CD8-positive, alpha-beta T cell (primary cell): ENCODE measurements at regions of chr6 and their contacts with region 1.

Region 1: GRCh38 chr6:163460307-163460782 is 45.8 kb downstream of the QKI start:
- DNase-seq: peak in 6 of 9 experiments; percentile 2 to 74 (median 33)
- ATAC-seq: peak; percentile 90
- H3K4me3 ChIP-seq: peak overlapping the region; percentile 48 to 56
- H3K4me3 Mint-ChIP-seq: peak overlapping the region; percentile 92
- H3K27ac ChIP-seq: peak overlapping the region; percentile 76 to 88
- H3K27ac Mint-ChIP-seq: peak overlapping the region; percentile 98
- H3K4me1 ChIP-seq: peaks cover 28% of the 10 kb centered on the region
- H3K4me1 Mint-ChIP-seq: peaks cover 58% of the 10 kb centered on the region
- H3K27me3 ChIP-seq: no peaks in the 10 kb centered on the region
- H3K27me3 Mint-ChIP-seq: no peaks in the 10 kb centered on the region
- CTCF ChIP-seq: no peak

Region 2: DNA sequence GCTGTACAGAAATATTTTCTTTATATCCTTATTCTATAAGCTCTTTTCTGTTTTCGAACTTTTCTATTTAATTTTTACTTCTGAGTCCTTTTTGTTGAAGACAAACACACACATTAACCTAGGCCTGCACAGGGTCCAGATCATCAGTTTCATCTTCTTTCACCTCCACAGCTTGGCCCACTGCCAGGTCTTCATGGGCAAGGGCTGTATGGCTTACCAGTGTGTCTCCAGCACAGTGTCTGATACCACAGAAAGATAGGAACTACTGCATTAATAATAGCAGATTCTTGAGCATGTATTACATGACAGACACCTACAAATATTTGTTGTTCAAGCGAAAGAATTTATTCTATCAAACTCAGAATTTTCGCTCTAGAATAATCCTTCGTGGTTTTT is 21.4 kb before region 1 on chr6:
- CTCF ChIA-PET with region 1: no interaction called
- POLR2A ChIA-PET with region 1: interaction called, 3 read pairs
- intact Hi-C with region 1: loop called (anchors 1 to 2 kb)
- DNase-seq: peak in 8 of 9 experiments; percentile 16 to 62 (median 50)
- ATAC-seq: no peak
- H3K4me3 ChIP-seq: no peak overlapping the region
- H3K4me3 Mint-ChIP-seq: no peak overlapping the region
- H3K27ac ChIP-seq: no peak overlapping the region
- H3K27ac Mint-ChIP-seq: no peak overlapping the region
- H3K4me1 ChIP-seq: peaks cover 14% of the 10 kb centered on the region
- H3K4me1 Mint-ChIP-seq: peaks cover 67% of the 10 kb centered on the region
- H3K27me3 ChIP-seq: no peaks in the 10 kb centered on the region
- H3K27me3 Mint-ChIP-seq: no peaks in the 10 kb centered on the region
- CTCF ChIP-seq: no peak

Region 3: DNA sequence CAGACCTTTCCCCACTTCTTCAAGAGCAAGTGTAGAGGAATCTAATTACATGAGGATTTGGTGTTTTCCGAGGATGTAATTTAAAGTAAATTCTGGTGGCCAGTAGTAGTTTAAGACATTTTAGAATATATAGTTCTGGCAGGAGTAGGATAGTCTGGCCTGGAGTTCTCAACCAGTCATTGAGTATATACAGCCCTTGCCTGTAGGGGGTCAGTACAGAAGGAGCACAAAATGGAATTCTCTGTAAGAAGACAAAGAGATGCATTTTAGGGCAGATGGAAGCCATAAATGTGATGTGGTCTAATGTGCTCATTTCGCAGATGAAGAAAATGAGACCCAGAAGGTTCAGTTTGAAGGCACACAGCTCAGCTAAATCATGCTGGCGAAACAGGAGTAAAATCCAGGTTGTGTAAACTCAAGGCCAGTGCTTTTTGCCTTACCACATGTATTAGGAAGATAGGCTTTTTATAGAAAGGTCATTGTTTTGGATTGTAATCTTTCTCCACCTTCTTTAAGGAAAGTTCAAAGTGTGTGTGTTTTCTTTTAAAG is 16.3 kb before region 1 on chr6:
- CTCF ChIA-PET with region 1: no interaction called
- POLR2A ChIA-PET with region 1: interaction called, 3 read pairs
- intact Hi-C with region 1: loop called (anchors 1 to 2 kb)
- DNase-seq: no peak
- ATAC-seq: no peak
- H3K4me3 ChIP-seq: no peak overlapping the region
- H3K4me3 Mint-ChIP-seq: no peak overlapping the region
- H3K27ac ChIP-seq: no peak overlapping the region
- H3K27ac Mint-ChIP-seq: no peak overlapping the region
- H3K4me1 ChIP-seq: peaks cover 3% of the 10 kb centered on the region
- H3K4me1 Mint-ChIP-seq: peaks cover 53% of the 10 kb centered on the region
- H3K27me3 ChIP-seq: no peaks in the 10 kb centered on the region
- H3K27me3 Mint-ChIP-seq: no peaks in the 10 kb centered on the region
- CTCF ChIP-seq: no peak

Region 4: DNA sequence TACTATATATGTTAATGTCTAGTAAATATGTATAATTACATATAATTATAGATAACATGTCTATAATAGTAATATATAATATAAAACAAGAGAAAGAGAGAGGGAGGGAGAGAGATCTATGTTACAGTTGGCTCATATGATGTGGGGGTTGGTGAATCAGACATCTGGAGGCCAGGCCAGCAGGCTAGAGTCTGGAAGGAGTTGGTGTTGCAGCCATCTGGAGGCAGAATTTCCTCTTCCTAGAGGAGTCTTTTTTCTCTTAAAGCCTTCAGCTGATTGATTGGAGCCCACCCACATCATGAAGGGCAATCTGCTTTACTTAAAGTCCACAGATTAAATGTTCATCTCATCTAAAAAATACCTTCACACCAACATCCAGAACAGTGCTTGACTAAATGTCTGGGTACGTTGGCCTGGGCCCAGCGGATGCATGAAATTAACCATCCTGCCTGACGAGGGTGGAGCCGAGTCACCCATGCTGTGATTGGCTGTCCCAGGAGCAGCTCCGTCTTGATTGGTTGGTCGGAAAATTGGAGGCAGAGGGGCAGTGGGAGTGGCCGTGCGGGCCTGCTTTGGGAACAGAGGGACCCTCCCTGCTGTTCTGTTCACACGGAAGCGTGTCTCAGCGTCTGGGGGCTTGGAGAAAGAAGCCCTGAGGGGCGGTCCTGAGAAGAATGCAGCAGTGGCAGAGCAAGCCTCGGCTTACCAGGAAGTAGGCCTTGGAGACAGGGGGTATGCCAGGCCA is 346.6 kb after region 1 on chr6:
- CTCF ChIA-PET with region 1: no interaction called
- POLR2A ChIA-PET with region 1: no interaction called
- intact Hi-C with region 1: no loop called
- DNase-seq: no peak
- ATAC-seq: no peak
- H3K4me3 ChIP-seq: no peak overlapping the region
- H3K4me3 Mint-ChIP-seq: no peak overlapping the region
- H3K27ac ChIP-seq: no peak overlapping the region
- H3K27ac Mint-ChIP-seq: no peak overlapping the region
- H3K4me1 ChIP-seq: no peaks in the 10 kb centered on the region
- H3K4me1 Mint-ChIP-seq: no peaks in the 10 kb centered on the region
- H3K27me3 ChIP-seq: no peaks in the 10 kb centered on the region
- H3K27me3 Mint-ChIP-seq: no peaks in the 10 kb centered on the region
- CTCF ChIP-seq: no peak